Activated CD4-positive, alpha-beta memory T cell treated with anti-CD3 and anti-CD28 coated beads for 36 hours (primary cell): ENCODE measurements at regions of chr20 and their contacts with region 1.

Region 1: GRCh38 chr20:38893565-38894090 is 32.6 kb upstream of the FAM83D start:
- DNase-seq: peak; percentile 89
- H3K4me3 Mint-ChIP-seq: peak overlapping the region; percentile 41
- H3K27ac Mint-ChIP-seq: peak overlapping the region; percentile 88
- H3K4me1 Mint-ChIP-seq: peaks cover 61% of the 10 kb centered on the region
- H3K27me3 Mint-ChIP-seq: no peaks in the 10 kb centered on the region

Region 2: DNA sequence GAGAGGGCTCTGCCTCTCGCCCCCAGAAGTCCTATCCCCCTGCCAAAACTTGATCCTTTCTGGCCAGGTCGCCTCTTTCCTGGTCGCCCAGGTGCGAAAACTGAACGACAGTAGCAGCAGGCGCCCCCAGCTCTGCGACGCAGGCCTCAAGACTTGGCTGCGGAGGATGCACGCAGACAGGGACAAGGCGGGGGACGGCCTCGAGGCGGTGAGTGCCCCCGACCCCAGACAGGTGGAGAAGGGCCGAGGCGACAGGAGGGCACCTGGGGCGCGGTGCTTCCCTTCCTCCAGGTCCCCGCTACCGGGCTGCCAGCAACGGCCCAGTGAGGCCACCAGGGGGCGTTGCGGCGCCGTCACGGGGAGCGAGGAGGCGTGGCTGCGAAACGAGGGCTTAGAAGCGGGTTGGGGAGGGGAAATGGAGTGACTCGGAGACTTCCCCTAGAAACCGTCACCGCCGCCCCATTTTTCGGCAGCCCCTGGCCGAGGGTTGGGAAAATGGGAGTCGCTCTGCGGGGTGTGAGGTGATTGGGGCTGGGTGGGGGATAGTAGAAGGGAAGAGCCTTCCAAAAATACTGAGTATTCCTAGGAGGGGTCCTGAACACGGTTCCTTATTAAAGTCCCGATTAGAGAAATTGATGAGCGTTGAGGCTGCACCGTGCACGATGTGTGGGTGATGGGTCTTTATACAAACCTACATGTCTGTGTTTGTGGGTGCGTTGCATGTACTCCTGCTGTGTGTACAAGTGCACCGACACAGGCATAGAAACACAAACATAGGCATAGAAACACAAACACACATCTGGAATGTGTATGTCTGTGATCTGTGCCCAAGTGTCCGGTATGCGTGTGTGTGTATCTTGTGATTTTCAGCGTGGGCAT is 247.4 kb before region 1 on chr20:
- CTCF ChIA-PET with region 1: interaction called, 7 read pairs
- POLR2A ChIA-PET with region 1: no interaction called
- intact Hi-C with region 1: loop called (anchors 2 kb)
- DNase-seq: peak; percentile 93
- H3K4me3 Mint-ChIP-seq: peak overlapping the region; percentile 43
- H3K27ac Mint-ChIP-seq: no peak overlapping the region
- H3K4me1 Mint-ChIP-seq: peaks cover 7% of the 10 kb centered on the region
- H3K27me3 Mint-ChIP-seq: peaks cover 23% of the 10 kb centered on the region

Region 3: DNA sequence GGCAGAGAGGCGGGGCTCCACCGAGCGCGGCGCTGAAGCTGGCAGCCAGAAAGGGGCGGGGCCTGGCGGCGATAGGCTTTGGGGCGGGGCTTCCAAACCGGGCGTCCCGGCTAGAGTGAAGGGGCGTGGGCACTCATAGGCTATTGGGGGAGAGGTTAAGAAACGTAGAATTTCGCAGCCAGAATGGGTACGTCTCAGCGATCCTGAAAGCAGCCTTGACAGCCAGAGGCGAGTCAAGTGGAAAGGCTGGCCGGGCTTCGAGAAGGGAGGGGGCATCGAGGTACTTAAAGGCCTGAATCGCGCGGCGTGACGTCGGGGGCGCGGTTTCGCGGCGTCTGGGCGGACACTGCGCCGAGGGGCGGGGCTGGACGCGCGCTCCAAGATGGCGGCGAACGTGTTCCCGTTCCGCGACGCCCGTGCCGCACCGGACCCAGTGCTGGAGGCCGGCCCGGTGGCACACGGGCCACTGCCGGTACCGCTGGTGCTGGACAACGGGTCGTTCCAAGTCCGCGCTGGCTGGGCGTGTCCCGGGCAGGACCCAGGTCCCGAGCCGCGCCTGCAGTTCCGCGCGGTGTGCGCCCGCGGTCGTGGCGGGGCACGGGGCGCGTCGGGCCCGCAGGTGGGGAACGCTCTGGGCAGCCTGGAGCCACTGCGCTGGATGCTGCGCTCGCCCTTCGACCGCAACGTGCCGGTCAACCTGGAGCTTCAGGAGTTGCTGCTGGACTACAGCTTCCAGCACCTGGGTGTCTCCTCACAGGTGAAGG is 145.3 kb before region 1 on chr20 and contains the start of gene ACTR5:
- CTCF ChIA-PET with region 1: interaction called, 32 read pairs
- POLR2A ChIA-PET with region 1: interaction called, 5 read pairs
- intact Hi-C with region 1: loop called (anchors 2 kb)
- DNase-seq: peak; percentile 97
- H3K4me3 Mint-ChIP-seq: peak within 1 kb of the TSS; percentile 91
- H3K27ac Mint-ChIP-seq: peak within 1 kb of the TSS; percentile 92
- H3K4me1 Mint-ChIP-seq: peaks cover 26% of the 10 kb centered on the region
- H3K27me3 Mint-ChIP-seq: peaks cover 5% of the 10 kb centered on the region
- total RNA-seq, gene ACTR5: 11.0 TPM

Region 4: DNA sequence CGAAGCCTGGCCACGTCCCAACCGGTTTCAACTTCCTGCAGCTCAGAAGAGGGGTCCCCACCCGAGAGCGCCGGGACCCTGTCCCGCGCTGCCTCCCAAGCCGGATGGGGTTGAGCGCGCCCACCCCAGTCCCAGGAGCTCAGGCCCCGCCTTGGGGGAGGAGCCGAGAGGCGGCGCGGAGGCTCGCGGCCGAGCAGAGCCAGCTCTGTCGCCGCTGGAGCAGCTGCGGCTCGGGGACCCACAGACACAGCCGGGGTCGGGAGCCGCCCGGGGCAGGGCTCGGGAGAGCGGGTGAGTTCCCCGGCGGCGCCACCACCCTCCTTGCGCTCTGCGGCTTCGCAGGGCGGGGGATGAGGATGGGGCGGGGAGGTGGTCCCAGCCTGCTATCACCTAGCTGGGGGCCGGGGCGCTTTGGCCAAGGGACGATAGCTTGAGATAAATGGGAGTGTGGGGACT is 88.1 kb before region 1 on chr20 and contains the start of gene PPP1R16B:
- CTCF ChIA-PET with region 1: interaction called, 67 read pairs
- POLR2A ChIA-PET with region 1: interaction called, 16 read pairs
- intact Hi-C with region 1: loop called (anchors 2 kb)
- DNase-seq: peak; percentile 85
- H3K4me3 Mint-ChIP-seq: peak within 1 kb of the TSS; percentile 86
- H3K27ac Mint-ChIP-seq: peak within 1 kb of the TSS; percentile 96
- H3K4me1 Mint-ChIP-seq: peaks cover 51% of the 10 kb centered on the region
- H3K27me3 Mint-ChIP-seq: no peaks in the 10 kb centered on the region
- total RNA-seq, gene PPP1R16B: 111 to 114 TPM

Region 5: GRCh38 chr20:38842558-38842981 is 51.1 kb before region 1 on chr20:
- CTCF ChIA-PET with region 1: interaction called, 11 read pairs
- POLR2A ChIA-PET with region 1: interaction called, 4 read pairs
- intact Hi-C with region 1: loop called (anchors 1 kb)
- DNase-seq: peak; percentile 88
- H3K4me3 Mint-ChIP-seq: peak overlapping the region; percentile 71
- H3K27ac Mint-ChIP-seq: peak overlapping the region; percentile 90
- H3K4me1 Mint-ChIP-seq: peaks cover 86% of the 10 kb centered on the region
- H3K27me3 Mint-ChIP-seq: no peaks in the 10 kb centered on the region